ENCODE measurements at regions of chr11 and their contacts with region 1.

Region 1: GRCh38 chr11:66835768-66836405 is 7.4 kb upstream of the RCE1 start:
- DNase-seq: no peak
- ATAC-seq: no peak
- H3K4me3 ChIP-seq: no peak overlapping the region
- H3K4me3 Mint-ChIP-seq: no peak overlapping the region
- H3K27ac ChIP-seq: no peak overlapping the region
- H3K27ac Mint-ChIP-seq: peak overlapping the region; percentile 15
- H3K4me1 ChIP-seq: peaks cover 6 to 18% of the 10 kb centered on the region in 2 donors
- H3K4me1 Mint-ChIP-seq: peaks cover 32% of the 10 kb centered on the region
- H3K27me3 ChIP-seq: no peaks in the 10 kb centered on the region
- H3K27me3 Mint-ChIP-seq: no peaks in the 10 kb centered on the region
- CTCF ChIP-seq: no peak

Region 2: DNA sequence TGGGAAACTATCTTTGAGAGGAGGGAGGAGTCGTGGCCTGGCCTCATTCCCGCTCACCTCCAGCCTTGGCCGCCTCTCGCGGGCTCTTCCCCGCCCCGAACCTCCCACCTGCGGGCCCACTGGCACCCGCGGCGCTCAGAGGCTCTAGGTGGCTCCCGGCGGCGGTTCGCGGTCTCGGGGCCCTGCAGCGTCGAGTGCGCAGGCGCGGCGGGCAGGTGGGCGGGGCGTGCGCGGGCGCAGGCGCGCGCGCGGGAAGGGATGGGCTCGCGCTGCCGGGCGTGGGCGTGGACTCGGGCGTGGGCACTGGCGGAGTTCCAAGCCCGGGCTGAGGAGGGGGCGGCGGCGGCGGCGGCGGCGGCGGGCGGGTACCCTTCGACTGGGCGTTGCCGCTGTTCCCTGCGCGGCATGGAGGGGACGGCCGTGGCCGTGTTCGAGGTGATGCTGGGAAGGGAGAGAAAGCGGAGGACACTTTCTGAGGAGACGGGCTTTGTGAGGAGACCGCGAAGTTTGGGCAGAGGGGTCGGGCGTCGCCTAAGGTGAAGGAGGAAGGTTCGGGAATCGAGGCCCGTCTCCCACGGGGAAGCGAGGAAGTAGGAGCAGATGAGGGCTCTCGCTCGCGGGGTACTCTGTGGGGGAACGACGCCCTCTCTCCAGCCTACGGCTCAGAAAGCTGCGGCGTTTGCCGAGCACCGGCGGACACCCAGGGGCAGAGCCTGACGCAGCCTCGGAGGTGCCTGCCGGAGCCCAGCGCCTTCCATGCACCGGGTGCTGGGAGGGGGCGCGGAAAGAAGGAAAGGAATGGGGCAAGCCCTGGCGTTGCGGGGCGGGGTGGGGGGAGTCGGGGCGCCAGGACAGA is 91.2 kb before region 1 on chr11:
- CTCF ChIA-PET with region 1: no interaction called
- POLR2A ChIA-PET with region 1: no interaction called
- intact Hi-C with region 1: loop called (anchors 2 kb)
- DNase-seq: peak; percentile 95
- ATAC-seq: peak; percentile 88
- H3K4me3 ChIP-seq: peak overlapping the region; percentile 70 to 97 (median 95)
- H3K4me3 Mint-ChIP-seq: peak overlapping the region; percentile 96
- H3K27ac ChIP-seq: peak overlapping the region; percentile 68 to 88
- H3K27ac Mint-ChIP-seq: peak overlapping the region; percentile 94
- H3K4me1 ChIP-seq: peaks cover 7 to 16% of the 10 kb centered on the region in 2 donors
- H3K4me1 Mint-ChIP-seq: peaks cover 32% of the 10 kb centered on the region
- H3K27me3 ChIP-seq: no peaks in the 10 kb centered on the region
- H3K27me3 Mint-ChIP-seq: no peaks in the 10 kb centered on the region
- CTCF ChIP-seq: no peak

Region 3: GRCh38 chr11:66883016-66883968 is 47.4 kb after region 1 on chr11:
- CTCF ChIA-PET with region 1: interaction called, 12 read pairs
- POLR2A ChIA-PET with region 1: no interaction called
- intact Hi-C with region 1: loop called (anchors 1 kb)
- DNase-seq: peak; percentile 67
- ATAC-seq: peak; percentile 43
- H3K4me3 ChIP-seq: no peak overlapping the region
- H3K4me3 Mint-ChIP-seq: no peak overlapping the region
- H3K27ac ChIP-seq: no peak overlapping the region
- H3K27ac Mint-ChIP-seq: no peak overlapping the region
- H3K4me1 ChIP-seq: no peaks in the 10 kb centered on the region
- H3K4me1 Mint-ChIP-seq: no peaks in the 10 kb centered on the region
- H3K27me3 ChIP-seq: peaks cover 0 to 5% (median 0%) of the 10 kb centered on the region in 4 experiments
- H3K27me3 Mint-ChIP-seq: peaks cover 13% of the 10 kb centered on the region
- CTCF ChIP-seq: peak; percentile 75

Measured in B cell (primary cell).